ENCODE measurements at regions of chrX and their contacts with region 1.

Region 1: GRCh38 chrX:107672955-107673378 is 44.7 kb downstream of the PRPS1 start:
- DNase-seq: peak; percentile 72 to 74
- ATAC-seq: peak; percentile 22 to 62 (median 40)
- H3K4me3 ChIP-seq: peak overlapping the region in 1 of 10 donors; percentile 12
- H3K27ac ChIP-seq: peak overlapping the region; percentile 74 to 92 (median 89)
- H3K4me1 ChIP-seq: peaks cover 0 to 60% (median 36%) of the 10 kb centered on the region in 9 donors
- H3K27me3 ChIP-seq: peaks cover 0 to 51% (median 0%) of the 10 kb centered on the region in 7 donors
- CTCF ChIP-seq: peak; percentile 39 to 70 (median 63)

Region 2: GRCh38 chrX:107710617-107711391 is 37.8 kb after region 1 on chrX:
- intact Hi-C with region 1: loop called in 7 of 10 experiments (anchors 2 to 5 kb)
- DNase-seq: peak in 1 of 2 donors; percentile 60
- ATAC-seq: peak; percentile 75 to 83 (median 79)
- H3K4me3 ChIP-seq: no peak overlapping the region
- H3K27ac ChIP-seq: peak overlapping the region; percentile 59 to 99 (median 95)
- H3K4me1 ChIP-seq: peaks cover 0 to 59% (median 24%) of the 10 kb centered on the region in 9 donors
- H3K27me3 ChIP-seq: peaks cover 0 to 9% (median 0%) of the 10 kb centered on the region in 7 donors
- CTCF ChIP-seq: no peak

Region 3: GRCh38 chrX:107716816-107717700 is 44.1 kb after region 1 on chrX:
- intact Hi-C with region 1: loop called in 9 of 10 experiments (anchors 1 to 10 kb)
- DNase-seq: peak; percentile 81 to 90
- ATAC-seq: peak; percentile 81 to 90 (median 87)
- H3K4me3 ChIP-seq: peak overlapping the region; percentile 42 to 81 (median 74)
- H3K27ac ChIP-seq: peak overlapping the region; percentile 81 to 99 (median 95)
- H3K4me1 ChIP-seq: peaks cover 3 to 61% (median 31%) of the 10 kb centered on the region in 9 donors
- H3K27me3 ChIP-seq: peaks cover 0 to 23% (median 0%) of the 10 kb centered on the region in 7 donors
- CTCF ChIP-seq: no peak

Region 4: DNA sequence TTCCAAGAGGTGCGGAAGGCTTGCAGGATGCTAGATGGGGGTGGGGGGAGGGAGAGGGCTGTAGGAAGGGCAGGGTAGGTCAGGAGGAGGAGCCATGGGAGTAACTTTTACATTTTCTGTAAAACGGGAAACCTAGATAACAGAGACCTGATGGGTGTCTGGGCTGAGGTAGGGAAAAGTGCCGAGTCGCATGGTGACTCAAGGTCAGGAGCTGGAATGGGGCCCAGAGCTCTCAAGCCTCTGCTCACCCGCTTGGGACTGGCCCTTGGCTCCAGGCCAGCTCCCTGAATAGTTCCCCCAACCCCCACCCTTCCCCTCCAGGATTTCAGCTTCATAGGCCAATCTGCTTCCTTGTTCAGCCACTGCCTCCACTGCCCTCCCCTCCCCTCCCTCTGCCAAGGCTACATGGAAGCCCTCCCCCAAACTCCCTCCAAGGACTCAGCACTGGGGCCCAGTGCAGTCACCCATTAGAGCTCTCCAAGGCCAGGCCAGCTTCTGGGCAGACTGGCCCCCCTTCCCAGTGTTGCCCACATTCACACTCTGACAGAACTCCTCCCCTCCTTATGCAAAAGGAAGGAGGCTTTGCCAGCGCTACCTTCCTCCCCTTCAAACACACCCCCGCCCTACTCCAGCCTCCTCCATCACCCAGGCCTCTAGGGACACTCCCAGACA is 59.0 kb after region 1 on chrX:
- intact Hi-C with region 1: loop called in 3 of 10 experiments (anchors 5 to 10 kb)
- DNase-seq: peak; percentile 87 to 90
- ATAC-seq: peak; percentile 73 to 91 (median 86)
- H3K4me3 ChIP-seq: no peak overlapping the region
- H3K27ac ChIP-seq: peak overlapping the region; percentile 31 to 82 (median 70)
- H3K4me1 ChIP-seq: peaks cover 10 to 97% (median 62%) of the 10 kb centered on the region in 9 donors
- H3K27me3 ChIP-seq: peaks cover 0 to 18% (median 0%) of the 10 kb centered on the region in 7 donors
- CTCF ChIP-seq: no peak